Colonic mucosa (tissue), 4 donors: ENCODE measurements at regions of chrX and their contacts with region 1.

Region 1: DNA sequence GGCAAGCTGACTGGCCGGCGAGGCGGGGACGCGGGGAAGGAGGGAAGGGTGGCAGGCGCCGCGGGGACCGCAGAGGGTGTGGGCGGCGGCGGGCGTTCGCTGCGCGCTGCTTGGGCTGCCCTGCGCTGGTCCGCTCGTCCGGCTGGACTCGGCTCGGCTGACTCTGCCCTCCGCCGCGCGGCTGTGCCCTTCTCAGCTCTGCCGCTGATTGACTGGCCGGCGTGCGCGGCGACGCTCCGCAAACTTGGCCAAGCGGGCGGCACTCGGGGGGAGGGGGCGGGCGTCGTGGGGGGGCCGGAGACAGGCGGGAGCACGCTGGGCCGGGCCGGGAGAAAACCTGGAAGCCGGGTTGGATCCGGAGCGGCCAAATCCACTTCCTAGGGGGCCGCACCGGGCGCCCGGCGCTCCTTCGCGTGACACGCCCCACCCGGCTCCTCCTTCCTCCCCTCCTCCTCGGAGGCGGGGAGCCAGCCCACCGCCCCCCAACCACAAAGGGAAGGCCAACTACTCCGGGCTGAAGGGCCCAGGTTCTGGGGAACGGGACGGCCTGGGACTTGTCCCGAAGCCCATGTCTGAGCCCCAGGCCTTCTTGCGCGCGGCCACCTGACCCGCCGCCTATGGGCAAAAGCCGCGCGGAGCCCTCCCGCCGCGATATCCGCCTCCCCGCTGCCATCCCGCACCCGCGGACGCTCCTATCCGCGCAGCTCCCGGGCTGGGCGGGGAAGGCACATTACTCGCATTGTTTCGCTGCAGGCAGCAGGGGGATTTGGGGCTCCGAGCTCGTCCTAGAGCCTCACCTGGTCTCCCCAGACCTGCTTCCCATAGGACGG is at the start of gene GPC4:
- DNase-seq: peak; percentile 73
- H3K4me3 ChIP-seq: peak within 1 kb of the TSS; percentile 56
- H3K27ac ChIP-seq: peak within 1 kb of the TSS; percentile 65
- H3K4me1 ChIP-seq: no peaks in the 10 kb centered on the region
- H3K27me3 ChIP-seq: peaks cover 8% of the 10 kb centered on the region
- CTCF ChIP-seq: no peak
- total RNA-seq, gene GPC4: 15.4 to 20.9 TPM

Region 2: DNA sequence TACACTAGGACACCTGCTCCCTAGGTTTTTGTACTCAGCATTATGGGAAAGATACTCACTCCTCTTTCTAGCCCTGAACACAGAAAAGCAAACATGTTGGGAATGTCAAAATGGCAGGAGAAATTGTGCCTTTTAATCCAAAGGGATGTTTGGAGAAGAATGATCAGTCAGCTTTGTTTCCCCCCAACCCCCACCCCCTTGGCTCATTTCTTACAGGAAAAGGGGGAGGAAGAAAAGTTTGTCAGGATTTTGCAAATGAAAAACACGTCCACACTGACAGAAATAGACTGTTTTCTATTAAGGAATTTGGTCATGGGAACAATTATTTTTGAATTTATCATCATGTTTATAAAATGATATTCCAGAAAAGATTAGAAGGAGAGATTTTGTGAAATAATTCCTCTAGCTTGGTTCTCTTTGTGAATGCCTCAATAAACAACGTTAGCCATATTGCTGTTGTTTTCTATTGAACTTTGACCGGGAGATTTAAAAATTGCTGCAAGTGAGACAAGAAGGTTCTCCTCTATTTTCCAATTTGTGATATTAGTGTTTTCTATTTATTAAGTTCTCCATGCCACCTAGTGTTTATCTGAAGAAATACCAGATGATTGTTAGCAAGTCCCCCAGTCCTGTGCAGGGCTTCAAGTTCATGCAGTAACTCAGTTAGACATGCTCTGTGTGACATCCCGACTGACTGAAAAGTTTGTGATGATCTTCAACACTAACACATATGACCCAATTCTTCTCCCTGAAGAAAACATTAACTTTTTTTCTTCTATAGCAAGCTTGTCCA is 166.0 kb before region 1 on chrX:
- intact Hi-C with region 1: no loop called
- DNase-seq: no peak
- H3K4me3 ChIP-seq: no peak overlapping the region
- H3K27ac ChIP-seq: no peak overlapping the region
- H3K4me1 ChIP-seq: no peaks in the 10 kb centered on the region
- H3K27me3 ChIP-seq: no peaks in the 10 kb centered on the region
- CTCF ChIP-seq: no peak

Region 3: DNA sequence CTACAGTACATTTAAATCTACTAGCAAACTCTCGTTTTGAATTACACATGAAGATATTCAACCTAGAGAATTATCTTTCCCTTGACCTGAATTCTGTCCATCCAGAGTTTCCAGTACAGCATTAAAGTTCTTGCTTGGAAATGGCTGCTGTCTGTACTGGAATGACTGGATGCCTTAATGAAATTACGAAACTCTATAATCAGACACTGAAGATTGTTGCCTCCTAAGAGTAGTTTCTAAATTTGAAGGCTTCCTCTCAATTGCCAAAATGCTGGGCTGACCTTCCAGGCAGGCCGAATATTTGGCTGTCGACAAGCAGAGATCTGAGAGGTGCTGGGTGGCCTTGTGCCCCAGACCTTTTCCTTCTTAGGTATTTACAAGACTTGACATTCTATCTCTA is 214.9 kb after region 1 on chrX:
- intact Hi-C with region 1: no loop called
- DNase-seq: no peak
- H3K4me3 ChIP-seq: no peak overlapping the region
- H3K27ac ChIP-seq: no peak overlapping the region
- H3K4me1 ChIP-seq: no peaks in the 10 kb centered on the region
- H3K27me3 ChIP-seq: no peaks in the 10 kb centered on the region
- CTCF ChIP-seq: no peak

Region 4: DNA sequence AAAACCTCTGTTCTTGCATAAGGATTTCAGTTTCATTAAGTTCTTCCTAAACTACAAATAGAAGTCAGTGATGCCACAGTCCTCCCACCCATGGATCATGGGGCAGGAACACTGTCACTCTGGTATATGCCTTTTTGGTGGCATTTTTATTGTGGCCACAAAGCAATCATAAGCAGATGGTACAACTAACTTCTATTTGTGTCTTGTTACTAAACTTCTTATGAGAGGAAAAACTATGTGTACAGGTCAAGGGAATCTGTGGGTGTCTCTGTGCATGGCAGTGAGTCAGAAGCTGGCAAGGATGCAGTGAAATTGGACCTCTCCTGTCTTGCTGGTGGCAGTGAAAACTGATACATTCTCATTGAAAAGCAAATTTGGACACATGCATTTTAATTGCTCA is 244.8 kb after region 1 on chrX:
- intact Hi-C with region 1: loop called (anchors 10 kb)
- DNase-seq: no peak
- H3K4me3 ChIP-seq: no peak overlapping the region
- H3K27ac ChIP-seq: no peak overlapping the region
- H3K4me1 ChIP-seq: no peaks in the 10 kb centered on the region
- H3K27me3 ChIP-seq: no peaks in the 10 kb centered on the region
- CTCF ChIP-seq: no peak

Region 5: GRCh38 chrX:133715715-133716114 is 300.2 kb after region 1 on chrX:
- intact Hi-C with region 1: no loop called
- DNase-seq: no peak
- H3K4me3 ChIP-seq: no peak overlapping the region
- H3K27ac ChIP-seq: no peak overlapping the region
- H3K4me1 ChIP-seq: no peaks in the 10 kb centered on the region
- H3K27me3 ChIP-seq: no peaks in the 10 kb centered on the region
- CTCF ChIP-seq: no peak